MCF 10A (cell line): ENCODE measurements at regions of chr18 and their contacts with region 1.

Region 1: DNA sequence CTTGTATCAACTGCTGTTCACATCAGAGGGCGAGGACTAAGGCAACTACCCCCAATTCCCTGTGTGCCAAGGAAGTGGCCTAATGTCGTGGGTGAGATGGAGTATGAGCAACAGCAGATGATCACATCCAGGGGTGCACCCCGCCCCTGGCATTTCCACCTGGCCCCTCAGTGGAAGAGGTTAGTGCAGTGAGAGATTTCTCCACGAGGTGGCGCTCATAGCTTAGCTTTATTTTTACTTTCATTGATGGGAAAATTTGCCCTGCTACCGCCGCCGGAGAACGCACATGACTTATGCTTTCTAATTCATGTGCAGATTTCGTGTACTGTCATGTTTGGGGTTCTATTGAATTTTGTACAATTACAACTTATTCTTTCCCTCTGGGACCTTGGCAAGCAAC is 470.6 kb upstream of the MEX3C start:
- DNase-seq: peak; percentile 70
- H3K4me3 Mint-ChIP-seq: no peak overlapping the region
- H3K27ac Mint-ChIP-seq: no peak overlapping the region
- H3K4me1 Mint-ChIP-seq: peaks cover 6% of the 10 kb centered on the region
- H3K27me3 Mint-ChIP-seq: peaks cover 25% of the 10 kb centered on the region
- CTCF ChIP-seq: peak; percentile 90

Region 2: DNA sequence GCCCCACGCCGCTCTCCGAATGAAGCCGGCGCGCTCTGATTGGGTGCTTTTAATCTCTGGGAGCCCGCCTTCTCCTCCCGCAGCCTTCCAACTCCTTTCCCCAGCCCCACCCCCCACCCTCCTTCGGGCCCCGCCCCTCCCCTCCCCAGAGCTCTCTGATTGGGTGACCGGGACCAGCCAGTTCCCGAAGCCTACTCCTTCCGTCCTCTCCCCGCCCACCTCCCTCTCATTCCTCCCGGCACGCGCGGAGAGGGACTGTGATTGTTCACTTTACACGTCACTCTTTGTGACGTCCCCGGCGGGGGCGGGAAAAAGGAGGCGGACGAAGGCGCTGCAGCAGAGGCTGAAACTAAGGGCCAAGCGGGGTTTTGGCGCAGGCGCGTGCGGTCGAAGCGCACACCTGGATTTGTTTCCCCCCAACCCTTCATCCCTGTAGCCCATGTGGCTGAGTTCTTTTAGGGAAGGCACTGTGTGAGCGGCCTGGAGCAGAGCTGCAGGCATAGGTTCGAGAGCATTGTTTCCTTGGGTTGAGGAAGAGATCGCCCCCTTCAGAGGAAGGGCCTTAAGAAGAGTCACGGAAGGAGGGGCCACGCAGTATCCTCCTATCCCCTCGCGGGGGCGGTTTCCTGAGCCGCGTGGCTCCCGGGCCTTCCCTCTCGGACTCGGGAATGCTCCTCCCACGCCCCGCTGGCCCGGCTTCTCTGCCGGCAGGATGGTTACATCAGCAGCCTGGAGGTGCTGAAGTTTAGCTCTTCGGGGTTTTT is 470.3 kb before region 1 on chr18 and contains the start of gene MEX3C:
- CTCF ChIA-PET with region 1: no interaction called
- POLR2A ChIA-PET with region 1: no interaction called
- intact Hi-C with region 1: no loop called
- DNase-seq: peak; percentile 100
- H3K4me3 Mint-ChIP-seq: peak within 1 kb of the TSS; percentile 69
- H3K27ac Mint-ChIP-seq: peak within 1 kb of the TSS; percentile 92
- H3K4me1 Mint-ChIP-seq: peaks cover 18% of the 10 kb centered on the region
- H3K27me3 Mint-ChIP-seq: no peaks in the 10 kb centered on the region
- CTCF ChIP-seq: no peak
- total RNA-seq, gene MEX3C: 65.3 and 81.9 TPM in 2 replicates

Region 3: DNA sequence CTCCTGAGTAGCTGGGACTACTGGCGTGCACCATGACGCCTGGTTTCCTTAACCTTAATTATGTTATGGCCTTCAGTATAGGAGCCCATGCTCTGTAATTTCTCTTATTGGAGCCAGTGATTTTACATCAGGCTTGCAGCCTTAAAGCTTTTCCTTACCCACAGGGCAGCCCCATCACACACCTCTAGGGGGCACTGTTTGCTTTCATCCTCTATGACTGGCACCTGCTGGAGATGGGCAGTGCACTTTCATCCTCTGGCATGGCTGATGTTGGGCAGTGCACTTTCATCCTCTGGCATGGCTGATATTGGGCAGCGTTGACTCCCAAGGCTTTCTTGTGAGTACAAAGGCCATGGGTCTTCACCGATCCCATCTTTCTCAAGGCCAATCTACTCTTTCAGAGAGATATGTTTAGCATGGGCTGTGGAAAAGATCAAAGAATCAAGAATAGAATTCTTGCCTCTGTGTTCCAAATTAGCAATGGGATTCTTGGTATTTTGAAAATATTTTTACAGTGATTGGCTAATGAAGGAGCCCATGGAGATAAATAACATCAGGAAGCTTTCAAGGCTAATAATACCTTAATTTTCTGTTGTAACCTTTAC is 390.0 kb before region 1 on chr18:
- CTCF ChIA-PET with region 1: interaction called, 6 read pairs
- POLR2A ChIA-PET with region 1: no interaction called
- intact Hi-C with region 1: loop called (anchors 5 kb)
- DNase-seq: peak; percentile 87
- H3K4me3 Mint-ChIP-seq: no peak overlapping the region
- H3K27ac Mint-ChIP-seq: no peak overlapping the region
- H3K4me1 Mint-ChIP-seq: no peaks in the 10 kb centered on the region
- H3K27me3 Mint-ChIP-seq: no peaks in the 10 kb centered on the region
- CTCF ChIP-seq: peak; percentile 87

Region 4: GRCh38 chr18:51621113-51621863 is 46.8 kb before region 1 on chr18:
- CTCF ChIA-PET with region 1: interaction called, 7 read pairs
- POLR2A ChIA-PET with region 1: no interaction called
- intact Hi-C with region 1: loop called (anchors 2 kb)
- DNase-seq: peak; percentile 74
- H3K4me3 Mint-ChIP-seq: no peak overlapping the region
- H3K27ac Mint-ChIP-seq: no peak overlapping the region
- H3K4me1 Mint-ChIP-seq: peaks cover 24% of the 10 kb centered on the region
- H3K27me3 Mint-ChIP-seq: no peaks in the 10 kb centered on the region
- CTCF ChIP-seq: peak; percentile 89

Region 5: DNA sequence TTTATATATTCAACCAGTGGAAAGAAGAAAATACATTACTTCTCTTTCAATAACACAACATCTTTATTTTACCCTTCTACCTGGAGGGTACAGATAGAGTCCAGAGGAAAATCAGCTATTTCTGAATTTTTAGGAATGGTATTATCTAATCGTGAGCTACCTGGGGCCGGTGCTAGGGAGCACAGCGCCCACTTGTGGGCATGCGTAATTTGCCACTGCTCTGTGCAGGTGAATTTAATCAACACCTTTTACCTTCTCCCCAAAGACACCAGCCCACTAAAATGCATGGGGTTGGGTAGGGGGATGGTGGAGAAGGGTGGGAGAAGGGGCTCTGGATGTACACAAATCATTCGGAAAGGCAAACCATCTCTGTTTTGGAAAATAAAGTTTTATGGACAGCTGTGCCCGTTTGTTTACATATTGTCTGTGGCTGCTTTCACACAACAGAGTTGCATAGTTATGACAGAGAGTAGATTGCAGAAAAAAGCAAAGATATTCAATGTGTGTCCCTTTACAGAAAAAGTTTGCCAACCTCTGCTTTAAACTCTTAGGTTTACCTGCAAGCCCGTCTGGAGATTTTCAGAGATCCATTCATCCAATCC is 620.4 kb after region 1 on chr18:
- CTCF ChIA-PET with region 1: interaction called, 28 read pairs
- POLR2A ChIA-PET with region 1: interaction called, 4 read pairs
- intact Hi-C with region 1: loop called (anchors 1 kb)
- DNase-seq: peak; percentile 49
- H3K4me3 Mint-ChIP-seq: no peak overlapping the region
- H3K27ac Mint-ChIP-seq: no peak overlapping the region
- H3K4me1 Mint-ChIP-seq: no peaks in the 10 kb centered on the region
- H3K27me3 Mint-ChIP-seq: no peaks in the 10 kb centered on the region
- CTCF ChIP-seq: peak; percentile 86

Region 6: DNA sequence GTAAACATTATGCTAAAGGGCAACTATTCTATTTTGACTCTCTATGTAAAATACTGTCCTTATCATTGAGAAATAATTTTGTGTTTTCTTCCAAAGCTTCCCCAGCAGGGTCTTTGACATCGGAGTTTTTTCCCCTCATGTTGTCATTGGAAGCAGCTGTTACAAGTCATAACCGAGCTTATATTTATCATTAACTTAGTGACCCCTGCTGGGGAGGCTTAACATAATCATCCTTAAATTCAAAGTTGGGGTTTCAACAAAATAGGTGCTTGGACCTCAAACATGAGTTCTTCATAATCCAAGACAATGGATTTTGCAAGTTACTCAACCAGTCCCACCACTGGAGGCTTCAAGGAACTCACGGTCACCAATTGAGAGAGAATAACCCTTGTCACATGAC is 1002.8 kb after region 1 on chr18:
- CTCF ChIA-PET with region 1: interaction called, 12 read pairs
- POLR2A ChIA-PET with region 1: no interaction called
- intact Hi-C with region 1: no loop called
- DNase-seq: peak; percentile 7
- H3K4me3 Mint-ChIP-seq: no peak overlapping the region
- H3K27ac Mint-ChIP-seq: no peak overlapping the region
- H3K4me1 Mint-ChIP-seq: no peaks in the 10 kb centered on the region
- H3K27me3 Mint-ChIP-seq: no peaks in the 10 kb centered on the region
- CTCF ChIP-seq: no peak

Region 7: GRCh38 chr18:53380063-53380639 is 1712.0 kb after region 1 on chr18:
- CTCF ChIA-PET with region 1: interaction called, 7 read pairs
- POLR2A ChIA-PET with region 1: no interaction called
- intact Hi-C with region 1: loop called (anchors 5 kb)
- DNase-seq: peak; percentile 50
- H3K4me3 Mint-ChIP-seq: no peak overlapping the region
- H3K27ac Mint-ChIP-seq: no peak overlapping the region
- H3K4me1 Mint-ChIP-seq: no peaks in the 10 kb centered on the region
- H3K27me3 Mint-ChIP-seq: no peaks in the 10 kb centered on the region
- CTCF ChIP-seq: peak; percentile 46